Posterior vena cava (tissue), 2 donors: ENCODE measurements at regions of chr20 and their contacts with region 1.

Region 1: GRCh38 chr20:50744143-50744792 is 12.9 kb downstream of the PARD6B start:
- DNase-seq: peak; percentile 87

Region 2: GRCh38 chr20:49122920-49123319 is 1621.3 kb before region 1 on chr20:
- intact Hi-C with region 1: no loop called
- DNase-seq: no peak

Region 3: GRCh38 chr20:50588034-50588611 is 156.1 kb before region 1 on chr20:
- intact Hi-C with region 1: loop called in 1 of 2 experiments (anchors 5 kb)
- DNase-seq: peak; percentile 90

Region 4: DNA sequence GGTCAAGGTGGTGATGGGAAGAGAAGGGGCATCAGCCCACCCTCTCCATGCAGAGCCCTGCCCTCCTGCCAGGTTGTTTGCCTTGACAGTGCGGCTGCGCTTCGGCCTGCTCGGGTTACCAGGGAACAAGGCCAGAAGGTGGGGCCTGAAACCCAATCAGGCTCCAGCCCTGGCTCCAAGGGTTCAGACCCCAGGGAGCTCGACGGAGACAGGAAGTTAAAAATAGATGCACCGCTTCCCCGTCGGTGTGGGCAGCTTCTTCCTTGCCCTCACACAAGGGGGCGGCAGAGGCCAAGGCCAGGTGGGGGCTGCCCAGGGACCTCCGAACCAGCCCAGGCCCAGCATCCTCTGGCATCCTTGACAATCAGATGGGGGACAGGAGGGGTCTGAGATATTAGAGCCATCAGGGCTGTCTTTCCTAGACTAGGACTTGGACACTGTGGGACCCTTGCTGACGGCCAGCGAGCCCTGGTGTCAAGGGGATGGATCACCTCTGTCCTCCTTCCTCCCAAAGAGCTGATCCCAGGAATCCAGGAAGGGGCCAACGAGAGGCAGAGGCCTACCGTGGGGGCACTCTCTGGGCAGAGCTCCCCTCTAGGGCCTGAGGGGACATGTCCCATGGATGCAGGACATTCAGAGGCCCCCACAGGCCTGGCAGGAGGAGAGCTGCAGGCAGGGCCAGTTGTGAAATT is 118.1 kb before region 1 on chr20:
- intact Hi-C with region 1: loop called in 1 of 2 experiments (anchors 10 kb)
- DNase-seq: no peak

Region 5: GRCh38 chr20:50790651-50791277 is 46.5 kb after region 1 on chr20:
- intact Hi-C with region 1: no loop called
- DNase-seq: peak; percentile 97

Region 6: DNA sequence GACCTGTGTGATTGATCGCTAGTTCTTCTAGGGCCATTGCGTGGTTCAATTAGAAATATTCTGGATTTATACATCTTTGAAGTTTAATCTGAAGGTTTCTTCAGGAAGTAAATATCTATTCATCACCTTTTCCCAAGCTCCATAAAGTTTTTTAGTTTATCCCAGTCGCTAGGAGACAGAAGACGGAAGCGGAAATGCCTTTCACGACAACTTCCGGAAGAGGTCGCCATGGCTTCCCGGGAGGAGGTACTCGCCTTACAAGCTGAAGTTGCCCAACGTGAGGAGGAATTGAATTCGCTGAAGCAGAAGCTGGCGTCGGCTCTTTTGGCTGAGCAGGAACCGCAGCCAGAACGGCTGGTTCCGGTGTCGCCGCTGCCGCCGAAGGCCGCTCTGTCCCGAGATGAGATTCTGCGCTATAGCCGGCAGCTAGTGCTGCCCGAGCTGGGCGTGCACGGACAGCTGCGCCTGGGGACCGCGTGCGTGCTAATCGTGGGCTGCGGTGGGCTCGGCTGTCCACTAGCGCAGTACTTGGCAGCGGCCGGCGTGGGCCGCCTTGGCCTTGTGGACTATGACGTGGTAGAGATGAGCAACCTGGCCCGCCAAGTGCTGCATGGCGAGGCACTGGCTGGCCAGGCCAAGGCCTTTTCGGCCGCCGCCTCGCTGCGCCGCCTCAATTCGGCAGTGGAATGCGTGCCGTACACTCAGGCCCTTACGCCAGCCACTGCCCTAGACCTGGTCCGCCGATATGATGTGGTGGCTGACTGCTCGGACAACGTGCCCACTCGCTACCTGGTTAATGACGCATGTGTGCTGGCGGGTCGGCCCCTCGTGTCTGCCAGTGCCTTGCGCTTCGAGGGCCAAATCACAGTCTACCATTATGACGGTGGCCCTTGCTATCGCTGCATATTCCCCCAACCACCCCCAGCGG is 214.6 kb after region 1 on chr20 and contains the start of gene MOCS3:
- intact Hi-C with region 1: no loop called
- DNase-seq: peak; percentile 95
- total RNA-seq, gene MOCS3: 2.7 to 3.5 TPM